ENCODE measurements at regions of chr1 and their contacts with region 1.

Region 1: GRCh38 chr1:9207086-9207485 is 27.5 kb upstream of the H6PD start:
- DNase-seq: no peak
- H3K4me3 Mint-ChIP-seq: no peak overlapping the region
- H3K27ac Mint-ChIP-seq: no peak overlapping the region
- H3K4me1 Mint-ChIP-seq: peaks cover 34% of the 10 kb centered on the region
- H3K27me3 Mint-ChIP-seq: peaks cover 40% of the 10 kb centered on the region

Region 2: DNA sequence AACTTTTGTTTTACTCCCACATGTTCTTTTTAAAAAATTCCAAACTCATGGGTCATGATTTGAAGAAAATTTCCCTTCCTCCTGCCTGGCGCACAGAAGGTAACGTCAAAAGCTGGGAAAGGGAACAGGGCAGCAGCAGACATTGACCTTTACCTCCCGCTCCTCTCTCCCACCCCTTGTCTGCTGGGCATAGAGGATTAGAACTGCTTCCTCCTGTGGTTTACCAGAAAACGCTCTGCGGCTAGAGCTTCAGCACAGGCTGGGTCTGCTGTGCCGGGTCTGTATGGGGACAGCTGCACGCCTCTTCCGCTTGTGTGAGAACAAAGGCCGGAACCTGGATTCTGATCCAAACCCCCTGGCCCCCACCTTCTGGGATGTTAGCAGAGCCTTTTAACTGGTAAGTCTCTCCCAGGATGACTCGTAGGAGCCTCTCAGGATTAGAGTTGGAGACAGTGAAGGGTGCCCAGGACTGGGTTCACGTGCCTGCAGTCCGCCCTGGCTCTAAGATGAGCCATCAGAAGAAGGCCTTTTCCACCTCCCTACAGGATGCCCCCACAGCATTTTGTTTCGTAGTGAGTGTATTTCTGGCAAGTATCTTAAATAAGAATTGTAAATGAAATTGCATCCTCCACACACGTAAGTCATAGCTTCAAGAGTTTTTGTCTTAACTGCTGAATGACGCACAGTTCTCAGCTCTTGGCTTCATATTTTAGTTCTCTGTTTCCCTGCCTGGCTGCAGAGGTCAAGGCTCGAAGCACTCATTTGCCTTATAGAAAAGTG is 32.7 kb after region 1 on chr1:
- intact Hi-C with region 1: loop called (anchors 2 kb)
- DNase-seq: peak; percentile 64
- H3K4me3 Mint-ChIP-seq: peak overlapping the region; percentile 66
- H3K27ac Mint-ChIP-seq: peak overlapping the region; percentile 91
- H3K4me1 Mint-ChIP-seq: peaks cover 67% of the 10 kb centered on the region
- H3K27me3 Mint-ChIP-seq: no peaks in the 10 kb centered on the region

Region 3: DNA sequence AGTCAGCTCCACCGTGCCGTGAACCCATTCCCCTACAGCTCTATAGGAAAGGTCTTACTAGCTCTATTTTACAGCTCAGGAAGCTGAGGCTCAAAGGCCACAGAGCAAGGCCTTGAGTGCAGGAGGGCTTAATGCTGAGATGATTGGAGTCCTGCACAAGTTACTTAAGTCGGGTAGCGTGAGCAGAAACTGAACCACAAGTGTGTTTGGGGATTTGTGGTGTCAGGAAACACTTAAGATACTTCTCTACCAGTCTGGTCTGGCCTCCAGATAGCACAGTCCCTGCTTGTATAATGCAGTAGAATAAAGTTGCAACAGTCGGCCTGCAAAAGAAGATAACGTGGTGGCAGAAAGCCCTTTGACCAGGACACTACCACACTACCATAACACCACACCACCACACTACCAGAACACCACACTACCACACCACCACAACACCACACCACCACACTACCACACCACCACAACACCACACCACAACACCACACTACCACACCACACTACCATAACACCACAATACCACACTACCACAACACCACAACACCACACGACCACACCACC is 203.7 kb after region 1 on chr1:
- intact Hi-C with region 1: no loop called
- DNase-seq: no peak
- H3K4me3 Mint-ChIP-seq: no peak overlapping the region
- H3K27ac Mint-ChIP-seq: peak overlapping the region; percentile 40
- H3K4me1 Mint-ChIP-seq: peaks cover 29% of the 10 kb centered on the region
- H3K27me3 Mint-ChIP-seq: no peaks in the 10 kb centered on the region

Measured in activated T-helper 2 cell treated with anti-CD3 and anti-CD28 coated beads, Interferon-gamma antibody, Interleukin-2, Interleukin-4, amounts not matched to agents 10 μg/mL and 5 μg/mL and 100 μg/mL, durations not matched to agents 14 hours and 24 hours and 36 hours (primary cell).